AG04450 (cell line): ENCODE measurements at regions of chr3 and their contacts with region 1.

Region 1: GRCh38 chr3:25664810-25665314 is at the start of gene TOP2B:
- DNase-seq: peak; percentile 85
- H3K4me3 ChIP-seq: peak within 1 kb of the TSS; percentile 77
- H3K27ac ChIP-seq: peak within 1 kb of the TSS; percentile 79
- H3K27me3 ChIP-seq: no peaks in the 10 kb centered on the region
- CTCF ChIP-seq: no peak
- polyA plus RNA-seq, gene TOP2B: 76.9 and 95.9 TPM in 2 replicates

Region 2: GRCh38 chr3:25782938-25783660 is 118.2 kb after region 1 on chr3 and contains the start of gene NGLY1:
- CTCF ChIA-PET with region 1: interaction called, 4 read pairs
- POLR2A ChIA-PET with region 1: interaction called, 11 read pairs
- DNase-seq: peak; percentile 36
- H3K4me3 ChIP-seq: peak within 1 kb of the TSS; percentile 84
- H3K27ac ChIP-seq: peak within 1 kb of the TSS; percentile 55
- H3K27me3 ChIP-seq: no peaks in the 10 kb centered on the region
- CTCF ChIP-seq: no peak
- polyA plus RNA-seq, gene NGLY1: 13.9 and 16.3 TPM in 2 replicates